PC-3 (cell line): ENCODE measurements at regions of chr14 and their contacts with region 1.

Region 1: GRCh38 chr14:49852301-49853157 is at the start of gene NEMF:
- DNase-seq: peak; percentile 95
- ATAC-seq: peak; percentile 66
- H3K4me3 ChIP-seq: peak within 1 kb of the TSS; percentile 87
- H3K27ac ChIP-seq: peak within 1 kb of the TSS; percentile 31
- H3K4me1 ChIP-seq: peaks cover 32% of the 10 kb centered on the region
- H3K27me3 ChIP-seq: no peaks in the 10 kb centered on the region
- CTCF ChIP-seq: peak; percentile 98
- total RNA-seq, gene NEMF: 52.9 and 54.0 TPM in 2 replicates

Region 2: GRCh38 chr14:49585803-49586672 is 266.5 kb before region 1 on chr14 and contains the start of gene RPS29:
- CTCF ChIA-PET with region 1: no interaction called
- POLR2A ChIA-PET with region 1: no interaction called
- intact Hi-C with region 1: loop called (anchors 2 kb)
- DNase-seq: peak; percentile 100
- ATAC-seq: peak; percentile 89
- H3K4me3 ChIP-seq: peak within 1 kb of the TSS; percentile 93
- H3K27ac ChIP-seq: peak within 1 kb of the TSS; percentile 59
- H3K4me1 ChIP-seq: peaks cover 20% of the 10 kb centered on the region
- H3K27me3 ChIP-seq: no peaks in the 10 kb centered on the region
- CTCF ChIP-seq: no peak
- total RNA-seq, gene RPS29: 1,420 and 1,912 TPM in 2 replicates

Region 3: DNA sequence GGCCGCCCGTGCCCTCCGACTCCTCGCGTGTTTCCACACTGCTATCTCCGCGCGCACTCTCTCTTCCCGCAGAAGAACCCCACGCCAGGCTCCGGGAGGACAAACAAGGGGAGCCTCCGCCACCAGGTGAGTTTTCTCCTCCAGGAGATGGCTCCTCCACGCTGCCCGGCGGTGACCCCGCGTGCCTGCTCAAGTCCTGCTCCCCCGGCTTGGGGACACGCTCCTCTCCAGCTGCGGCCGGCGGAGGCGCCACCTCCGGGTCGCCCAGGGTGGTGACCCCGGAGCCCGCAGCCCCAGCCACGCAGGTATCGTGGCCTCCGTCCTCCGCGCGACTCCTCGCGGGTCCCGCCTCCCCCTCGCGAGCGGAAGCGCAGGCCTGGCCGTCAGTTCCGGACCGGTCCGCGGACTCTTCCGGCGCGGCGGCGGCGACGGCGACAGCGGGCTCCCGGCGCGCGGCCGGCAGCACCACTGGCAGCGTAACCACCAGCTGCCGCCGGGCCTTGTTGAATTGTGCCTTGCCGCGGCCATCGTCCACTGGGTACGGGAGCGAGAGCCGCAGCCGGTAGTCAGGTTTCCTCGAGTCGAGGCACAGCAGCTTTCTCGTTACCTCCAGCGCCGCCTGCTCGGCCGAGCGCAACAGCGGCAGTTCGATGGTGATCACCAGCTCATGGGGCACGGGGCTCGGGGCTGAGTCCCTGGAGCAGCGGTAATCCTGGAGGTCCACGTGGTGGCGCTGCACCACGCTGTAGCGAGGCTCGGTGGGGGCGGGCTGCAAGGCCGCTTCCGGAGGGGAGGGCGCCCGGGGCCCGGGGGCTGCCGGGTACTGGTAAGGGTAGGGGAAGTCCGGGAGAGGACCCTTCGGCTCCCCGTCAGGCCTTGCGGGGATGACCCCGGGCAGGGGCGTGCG is 218.6 kb before region 1 on chr14:
- CTCF ChIA-PET with region 1: interaction called, 5 read pairs
- POLR2A ChIA-PET with region 1: no interaction called
- intact Hi-C with region 1: loop called (anchors 1 kb)
- DNase-seq: peak; percentile 97
- ATAC-seq: peak; percentile 78
- H3K4me3 ChIP-seq: peak overlapping the region; percentile 71
- H3K27ac ChIP-seq: peak overlapping the region; percentile 88
- H3K4me1 ChIP-seq: peaks cover 28% of the 10 kb centered on the region
- H3K27me3 ChIP-seq: no peaks in the 10 kb centered on the region
- CTCF ChIP-seq: peak; percentile 94

Region 4: DNA sequence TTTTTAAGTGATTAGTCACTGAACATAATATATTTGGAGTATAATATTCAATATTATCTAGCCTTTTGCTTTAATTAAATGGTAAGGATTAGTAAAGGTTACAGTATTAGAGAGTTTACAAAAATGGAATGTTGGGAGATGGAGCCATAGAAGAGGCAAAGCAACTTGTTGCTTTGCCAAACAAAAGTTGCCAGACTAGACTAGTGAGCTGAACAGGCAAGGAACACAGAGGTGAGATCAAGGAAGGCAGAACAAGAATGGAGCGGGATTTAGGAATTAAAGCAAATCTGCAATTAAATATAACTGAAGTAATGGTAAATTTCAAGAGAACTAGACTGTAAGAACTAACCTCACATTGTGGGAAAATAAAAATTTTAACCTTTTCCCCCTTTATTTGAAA is 45.4 kb after region 1 on chr14:
- CTCF ChIA-PET with region 1: interaction called, 15 read pairs
- POLR2A ChIA-PET with region 1: no interaction called
- intact Hi-C with region 1: no loop called
- DNase-seq: peak; percentile 73
- ATAC-seq: peak; percentile 28
- H3K4me3 ChIP-seq: peak overlapping the region; percentile 91
- H3K27ac ChIP-seq: peak overlapping the region; percentile 24
- H3K4me1 ChIP-seq: peaks cover 32% of the 10 kb centered on the region
- H3K27me3 ChIP-seq: no peaks in the 10 kb centered on the region
- CTCF ChIP-seq: no peak

Region 5: DNA sequence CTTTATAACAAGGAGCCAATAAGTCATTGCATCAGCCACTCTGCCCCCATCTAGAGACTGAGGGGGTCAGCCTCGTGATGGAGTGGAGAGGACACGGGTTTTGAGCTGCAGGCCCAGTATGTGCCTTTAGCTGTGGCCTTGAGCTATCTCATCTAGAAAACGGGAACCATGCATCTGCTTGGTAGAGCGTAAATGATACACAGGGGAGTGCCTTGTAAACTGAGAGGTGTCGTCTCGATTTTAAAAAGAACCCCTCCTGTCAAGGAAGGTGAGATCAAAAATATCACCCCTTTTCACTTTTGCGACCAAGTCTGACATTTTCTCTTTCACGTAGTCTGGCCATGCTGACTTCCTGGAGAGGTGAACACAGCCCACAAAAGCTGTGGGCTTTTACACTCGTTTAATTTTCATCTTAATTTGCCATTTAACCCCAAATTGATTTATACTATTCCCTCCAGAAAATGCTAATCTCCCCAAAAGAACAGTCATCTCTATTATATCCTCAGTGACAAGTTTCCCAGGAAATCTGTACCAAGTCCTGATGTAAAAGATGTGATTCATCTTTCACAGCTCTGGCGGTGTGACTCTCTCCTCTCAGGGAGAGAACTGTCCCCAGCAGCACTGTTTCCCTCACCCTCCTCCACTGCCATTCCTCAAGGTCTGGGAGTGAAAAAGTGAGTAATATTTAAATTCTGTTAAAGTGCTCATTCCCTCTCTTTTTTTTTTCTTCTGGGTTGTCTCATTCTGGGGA is 233.2 kb after region 1 on chr14:
- CTCF ChIA-PET with region 1: no interaction called
- POLR2A ChIA-PET with region 1: no interaction called
- intact Hi-C with region 1: no loop called
- DNase-seq: peak; percentile 53
- ATAC-seq: peak; percentile 88
- H3K4me3 ChIP-seq: no peak overlapping the region
- H3K27ac ChIP-seq: no peak overlapping the region
- H3K4me1 ChIP-seq: 0 out of 2 replicates have a peak, but pooled peaks cover 4% of the 10 kb centered on the region
- H3K27me3 ChIP-seq: no peaks in the 10 kb centered on the region
- CTCF ChIP-seq: no peak

Region 6: DNA sequence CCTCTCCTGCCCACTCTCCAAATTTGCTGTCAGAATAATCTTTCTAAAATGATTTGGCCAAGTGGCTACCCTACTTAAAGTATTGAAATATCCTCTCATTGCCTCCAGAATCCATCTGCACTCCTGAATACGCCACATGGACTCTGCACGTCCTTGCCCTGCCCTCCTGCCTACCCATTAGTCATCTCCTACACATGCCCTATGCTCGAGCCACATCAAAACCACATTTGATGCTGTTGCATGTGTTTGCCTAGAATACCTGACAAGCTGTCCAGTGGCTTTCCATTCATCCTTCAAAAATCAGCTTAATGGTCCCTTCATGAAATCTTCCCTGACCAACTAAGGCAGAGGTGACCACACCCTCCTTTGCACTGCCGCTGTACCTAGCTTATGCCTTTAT is 246.8 kb after region 1 on chr14:
- CTCF ChIA-PET with region 1: interaction called, 3 read pairs
- POLR2A ChIA-PET with region 1: interaction called, 13 read pairs
- intact Hi-C with region 1: no loop called
- DNase-seq: peak; percentile 93
- ATAC-seq: peak; percentile 99
- H3K4me3 ChIP-seq: no peak overlapping the region
- H3K27ac ChIP-seq: peak overlapping the region; percentile 66
- H3K4me1 ChIP-seq: peaks cover 38% of the 10 kb centered on the region
- H3K27me3 ChIP-seq: no peaks in the 10 kb centered on the region
- CTCF ChIP-seq: no peak

Region 7: DNA sequence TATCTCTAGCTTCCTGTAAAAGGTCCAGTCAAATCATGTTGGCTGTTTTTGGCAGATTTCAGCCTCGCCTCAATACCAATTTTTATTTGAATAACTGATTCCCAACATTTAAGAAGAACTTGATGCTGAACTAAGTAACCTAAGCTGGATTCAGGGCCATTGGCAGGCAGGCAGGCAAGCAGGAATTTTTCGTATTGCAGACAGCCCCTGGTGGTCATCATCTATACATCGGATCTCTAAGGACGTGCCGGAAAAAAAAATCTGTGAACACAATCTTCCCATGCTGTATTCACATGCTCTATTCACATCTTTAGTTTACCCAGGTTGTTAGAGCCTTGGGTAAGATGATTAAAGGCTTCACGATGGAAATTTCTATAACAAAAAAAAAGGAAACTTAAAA is 256.8 kb after region 1 on chr14:
- CTCF ChIA-PET with region 1: interaction called, 3 read pairs
- POLR2A ChIA-PET with region 1: no interaction called
- intact Hi-C with region 1: loop called (anchors 1 kb)
- DNase-seq: peak; percentile 38
- ATAC-seq: peak; percentile 16; the same call in 1 of the 2 replicates
- H3K4me3 ChIP-seq: no peak overlapping the region
- H3K27ac ChIP-seq: no peak overlapping the region
- H3K4me1 ChIP-seq: peaks cover 10% of the 10 kb centered on the region
- H3K27me3 ChIP-seq: no peaks in the 10 kb centered on the region
- CTCF ChIP-seq: peak; percentile 62